ENCODE measurements at regions of chr7 and their contacts with region 1.

Region 1: GRCh38 chr7:32204361-32205018 is 134.3 kb upstream of the PDE1C start:
- DNase-seq: peak; percentile 61 to 70 (median 63)
- ATAC-seq: peak; percentile 79
- H3K4me3 ChIP-seq: no peak overlapping the region
- H3K27ac ChIP-seq: no peak overlapping the region
- H3K4me1 ChIP-seq: no peaks in the 10 kb centered on the region
- H3K27me3 ChIP-seq: no peaks in the 10 kb centered on the region
- CTCF ChIP-seq: peak; percentile 44 to 93 (median 88)
- POLR2A ChIP-seq: no peak

Region 2: DNA sequence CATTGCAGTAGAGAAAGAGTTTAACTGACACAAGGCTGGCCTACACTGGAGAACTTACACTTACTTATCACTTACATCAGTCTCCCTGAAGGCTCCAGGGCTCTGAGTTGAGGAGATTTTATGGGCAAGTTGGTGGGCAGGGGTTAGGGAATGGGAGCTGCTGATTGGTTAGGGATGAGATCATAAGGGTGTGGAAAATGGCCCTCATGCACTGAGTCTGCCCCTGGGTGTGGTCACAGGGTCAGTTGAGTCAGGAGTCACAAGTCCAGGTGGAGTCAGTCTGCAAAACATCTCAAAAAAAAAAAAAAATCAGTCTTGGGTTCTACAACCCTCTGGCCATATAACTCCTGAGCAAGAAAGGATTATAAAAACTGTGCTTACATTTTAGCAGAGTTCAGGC is 456.9 kb before region 1 on chr7:
- intact Hi-C with region 1: loop called (anchors 5 kb)
- DNase-seq: no peak
- ATAC-seq: no peak
- H3K4me3 ChIP-seq: no peak overlapping the region
- H3K27ac ChIP-seq: no peak overlapping the region
- H3K4me1 ChIP-seq: no peaks in the 10 kb centered on the region
- H3K27me3 ChIP-seq: no peaks in the 10 kb centered on the region
- CTCF ChIP-seq: no peak
- POLR2A ChIP-seq: no peak

Region 3: DNA sequence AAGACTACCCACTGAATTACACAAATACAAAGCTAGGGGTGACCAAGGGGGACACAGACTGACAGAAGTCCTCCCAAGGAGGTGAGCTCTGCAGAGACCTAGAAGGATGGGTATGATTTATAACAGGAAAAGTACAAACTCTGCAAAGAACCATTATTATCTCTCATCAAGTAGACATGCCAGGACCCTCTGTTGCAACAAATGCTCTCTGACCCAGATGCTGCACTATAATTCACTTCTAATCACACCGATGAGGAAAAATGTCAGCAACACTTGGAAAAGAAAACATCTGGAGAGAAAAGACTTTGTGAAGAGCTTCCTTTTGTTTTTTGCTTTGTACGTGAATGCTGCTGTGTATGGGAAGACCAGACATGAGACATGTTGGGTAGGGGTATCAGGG is 44.0 kb after region 1 on chr7:
- intact Hi-C with region 1: no loop called
- DNase-seq: no peak
- ATAC-seq: no peak
- H3K4me3 ChIP-seq: no peak overlapping the region
- H3K27ac ChIP-seq: no peak overlapping the region
- H3K4me1 ChIP-seq: no peaks in the 10 kb centered on the region
- H3K27me3 ChIP-seq: no peaks in the 10 kb centered on the region
- CTCF ChIP-seq: no peak
- POLR2A ChIP-seq: no peak

Region 4: DNA sequence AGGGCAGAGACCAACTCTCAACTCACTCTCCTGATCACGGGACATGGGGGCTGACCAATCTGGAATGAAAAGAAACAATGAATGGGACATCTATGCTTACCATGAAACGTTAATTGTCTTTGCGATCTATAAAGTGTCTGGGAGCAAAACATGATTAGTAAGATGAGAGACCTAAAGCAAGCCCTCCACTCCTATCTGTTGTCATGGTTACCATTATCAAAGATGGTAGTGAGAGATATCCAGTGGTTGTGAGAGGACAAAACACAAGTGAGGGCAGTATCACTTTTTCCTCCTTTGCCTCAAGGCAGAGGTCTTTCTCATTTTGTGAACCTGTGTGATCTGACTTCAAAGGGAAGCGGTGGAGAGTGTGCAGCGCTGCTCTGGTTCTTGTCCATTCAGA is 155.6 kb after region 1 on chr7:
- intact Hi-C with region 1: loop called (anchors 10 kb)
- DNase-seq: no peak
- ATAC-seq: no peak
- H3K4me3 ChIP-seq: no peak overlapping the region
- H3K27ac ChIP-seq: no peak overlapping the region
- H3K4me1 ChIP-seq: no peaks in the 10 kb centered on the region
- H3K27me3 ChIP-seq: no peaks in the 10 kb centered on the region
- CTCF ChIP-seq: no peak
- POLR2A ChIP-seq: no peak